Cardiac septum (tissue), 1 donor: ENCODE measurements at regions of chr15 and their contacts with region 1.

Region 1: DNA sequence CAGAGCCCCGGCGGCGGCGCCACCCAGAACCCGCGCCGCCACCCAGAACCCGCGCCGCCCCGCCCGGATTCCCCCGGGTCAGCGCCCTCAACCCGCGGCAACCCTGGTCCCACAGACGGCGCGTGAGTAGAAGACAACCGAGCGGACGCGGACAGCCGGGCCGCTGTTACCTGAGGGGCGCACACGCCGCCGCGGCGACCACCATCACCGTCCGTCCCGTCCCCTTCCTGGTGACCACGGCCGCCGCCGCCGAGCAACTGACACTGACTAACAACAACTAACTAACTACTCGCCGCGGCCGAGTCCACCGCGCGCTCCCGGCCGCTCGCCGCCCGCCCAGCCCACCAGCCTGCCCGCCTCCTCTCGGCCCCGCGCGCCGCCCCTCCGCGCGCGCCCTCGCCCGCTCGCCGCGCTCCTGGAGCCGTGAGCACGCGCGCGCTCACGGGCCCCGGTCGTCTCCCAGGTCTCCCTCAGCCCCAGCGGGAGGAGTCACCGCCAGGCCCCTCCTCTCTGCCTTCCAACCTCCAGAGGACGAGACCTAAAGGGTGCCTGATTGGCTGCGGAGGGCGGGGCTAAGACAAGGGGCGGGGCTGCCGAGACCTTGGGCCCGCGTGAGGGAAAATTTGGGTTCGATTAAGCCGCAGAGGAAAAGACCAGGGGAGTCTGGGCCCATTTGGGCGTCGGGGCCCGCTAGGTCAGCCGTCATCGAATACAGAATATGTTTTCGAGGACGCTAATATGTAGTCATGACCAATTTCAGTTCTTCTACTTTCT is at the start of gene PEAK1:
- DNase-seq: peak; percentile 99
- total RNA-seq, gene PEAK1: 132 TPM

Region 2: GRCh38 chr15:77186594-77187011 is 233.4 kb before region 1 on chr15:
- intact Hi-C with region 1: loop called (anchors 2 kb)
- DNase-seq: no peak

Region 3: DNA sequence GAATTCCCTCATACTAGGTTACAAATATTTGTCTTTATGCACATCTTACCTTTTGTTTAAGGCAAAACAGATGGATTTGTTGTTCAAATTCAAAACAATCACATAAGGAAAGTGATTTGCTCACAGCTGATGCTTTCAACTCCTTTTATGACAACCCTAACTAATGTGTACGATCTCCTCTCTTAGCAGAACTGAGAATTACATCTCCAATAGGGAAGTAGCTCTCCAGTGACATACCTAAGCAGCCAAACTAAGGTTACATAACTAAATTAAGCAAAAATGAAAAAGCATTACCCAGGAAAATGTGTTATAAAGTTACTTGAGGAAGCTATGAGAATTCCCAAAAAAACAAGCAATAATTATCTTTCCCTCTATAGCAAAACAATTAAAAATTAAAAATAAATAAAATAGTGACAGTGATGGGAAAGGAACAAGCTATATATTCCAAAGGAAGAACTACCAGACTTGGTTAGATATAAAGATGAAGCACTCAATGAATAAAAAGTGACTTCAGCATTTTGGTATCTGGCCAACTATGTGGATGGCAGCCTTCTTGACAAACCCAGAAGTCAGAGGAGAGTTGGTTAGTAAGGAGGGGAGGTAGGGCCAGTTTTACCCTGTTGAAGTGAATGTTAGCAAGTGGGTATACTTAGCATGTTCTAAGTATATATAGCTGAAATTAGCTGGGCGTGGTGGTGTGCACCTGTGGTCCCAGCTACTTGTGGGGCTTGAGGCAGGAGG is 32.5 kb before region 1 on chr15:
- intact Hi-C with region 1: no loop called
- DNase-seq: no peak